Right ventricle myocardium inferior (tissue), 1 donor: ENCODE measurements at regions of chr18 and their contacts with region 1.

Region 1: DNA sequence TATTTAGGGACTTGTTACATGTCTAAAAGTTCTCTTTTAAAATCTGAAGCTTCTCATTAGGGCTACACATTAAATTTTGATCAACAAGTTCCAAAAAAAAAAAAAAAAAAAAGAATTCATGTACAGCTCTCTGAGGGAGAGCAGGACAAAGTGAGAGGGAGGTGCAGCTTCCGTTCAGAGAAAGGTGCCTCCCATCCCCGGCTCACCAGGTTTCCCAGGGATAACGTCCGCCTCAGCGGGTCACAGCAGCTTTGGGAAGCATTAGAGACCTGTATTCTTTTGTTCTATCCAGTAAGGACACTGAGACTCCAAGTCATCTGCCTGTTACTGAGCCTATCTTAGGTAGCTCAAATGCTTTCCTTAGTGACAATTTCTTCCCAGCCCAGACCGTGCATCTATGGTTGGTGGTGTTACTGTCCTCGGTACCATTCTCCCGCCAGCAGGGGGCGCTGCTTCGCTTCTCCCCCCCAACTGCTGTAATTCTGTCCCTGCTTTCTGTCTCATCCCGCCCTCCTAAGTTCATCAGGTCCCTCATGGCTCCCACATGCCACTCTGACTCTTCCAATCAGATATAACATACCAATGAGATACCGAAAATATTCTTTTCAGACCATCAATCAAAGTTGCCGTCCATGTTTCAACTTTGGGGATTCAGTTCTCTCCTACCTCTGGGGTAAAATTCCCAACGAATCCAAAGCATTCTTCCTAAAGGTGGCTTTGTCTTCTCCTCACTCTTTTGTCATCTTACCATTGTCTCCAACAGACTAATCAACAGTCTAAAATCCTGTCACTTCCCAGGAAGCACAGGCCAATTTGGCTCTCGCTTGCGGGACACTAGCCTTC is 466.5 kb downstream of the METTL4 start:
- DNase-seq: no peak
- ATAC-seq: peak; percentile 57

Region 2: GRCh38 chr18:2223849-2224248 is 119.0 kb after region 1 on chr18:
- intact Hi-C with region 1: loop called (anchors 2 kb)
- DNase-seq: no peak
- ATAC-seq: peak; percentile 39